Astrocyte of the spinal cord (primary cell): ENCODE measurements at regions of chr4 and their contacts with region 1.

Region 1: DNA sequence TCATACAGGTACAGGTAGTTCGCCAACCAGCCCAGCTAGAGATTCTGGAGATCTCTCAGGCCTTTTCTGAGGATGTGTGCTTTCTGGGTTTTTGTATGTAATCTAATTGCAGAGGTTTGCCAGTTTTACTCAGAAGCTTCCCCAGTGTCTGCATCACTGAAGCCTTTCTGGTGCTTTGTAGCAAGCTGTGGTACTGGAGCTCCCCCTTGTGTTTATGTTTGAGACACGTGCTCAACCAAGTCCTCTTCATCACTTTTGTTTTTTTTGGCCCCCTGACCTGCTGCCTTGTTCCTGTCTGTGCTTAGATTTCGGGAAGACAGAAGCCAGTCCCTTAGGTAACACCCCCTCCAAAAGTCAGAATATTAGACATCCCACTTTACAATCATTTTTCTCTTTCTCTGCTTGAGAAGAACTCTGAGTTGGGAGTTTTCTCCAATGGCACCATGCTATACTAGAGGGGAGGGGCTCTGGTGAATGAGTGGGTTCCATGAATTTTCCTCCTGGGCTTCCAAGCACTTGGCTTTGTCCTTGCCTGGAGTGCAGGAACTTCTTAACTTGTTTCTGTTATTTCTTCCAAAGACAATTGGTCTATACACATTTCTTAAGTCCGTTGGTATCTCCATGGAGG is 128.4 kb upstream of the TBC1D9 start:
- DNase-seq: peak; percentile 73
- H3K4me3 ChIP-seq: no peak overlapping the region
- CTCF ChIP-seq: peak; percentile 78

Region 2: DNA sequence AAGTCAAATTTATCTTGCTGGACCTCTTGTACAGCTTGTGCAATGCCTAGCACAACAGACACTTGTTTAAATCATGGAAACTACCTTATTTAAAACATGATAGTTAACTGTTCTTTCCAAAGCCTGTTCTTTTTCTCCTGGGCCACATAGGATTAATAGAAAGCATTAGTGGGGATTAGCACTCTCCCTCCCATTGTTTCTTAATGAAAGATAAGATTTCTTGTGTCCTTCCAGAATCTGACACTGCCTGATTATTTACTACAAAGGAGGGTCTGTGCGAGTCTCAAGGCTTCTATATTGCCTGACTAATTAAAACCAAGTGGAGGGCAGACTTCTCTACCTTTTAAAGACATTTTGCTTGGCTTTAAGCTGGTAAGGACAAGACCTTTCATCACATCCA is 369.1 kb before region 1 on chr4:
- in situ Hi-C with region 1: no loop called
- DNase-seq: no peak
- H3K4me3 ChIP-seq: no peak overlapping the region
- CTCF ChIP-seq: no peak

Region 3: DNA sequence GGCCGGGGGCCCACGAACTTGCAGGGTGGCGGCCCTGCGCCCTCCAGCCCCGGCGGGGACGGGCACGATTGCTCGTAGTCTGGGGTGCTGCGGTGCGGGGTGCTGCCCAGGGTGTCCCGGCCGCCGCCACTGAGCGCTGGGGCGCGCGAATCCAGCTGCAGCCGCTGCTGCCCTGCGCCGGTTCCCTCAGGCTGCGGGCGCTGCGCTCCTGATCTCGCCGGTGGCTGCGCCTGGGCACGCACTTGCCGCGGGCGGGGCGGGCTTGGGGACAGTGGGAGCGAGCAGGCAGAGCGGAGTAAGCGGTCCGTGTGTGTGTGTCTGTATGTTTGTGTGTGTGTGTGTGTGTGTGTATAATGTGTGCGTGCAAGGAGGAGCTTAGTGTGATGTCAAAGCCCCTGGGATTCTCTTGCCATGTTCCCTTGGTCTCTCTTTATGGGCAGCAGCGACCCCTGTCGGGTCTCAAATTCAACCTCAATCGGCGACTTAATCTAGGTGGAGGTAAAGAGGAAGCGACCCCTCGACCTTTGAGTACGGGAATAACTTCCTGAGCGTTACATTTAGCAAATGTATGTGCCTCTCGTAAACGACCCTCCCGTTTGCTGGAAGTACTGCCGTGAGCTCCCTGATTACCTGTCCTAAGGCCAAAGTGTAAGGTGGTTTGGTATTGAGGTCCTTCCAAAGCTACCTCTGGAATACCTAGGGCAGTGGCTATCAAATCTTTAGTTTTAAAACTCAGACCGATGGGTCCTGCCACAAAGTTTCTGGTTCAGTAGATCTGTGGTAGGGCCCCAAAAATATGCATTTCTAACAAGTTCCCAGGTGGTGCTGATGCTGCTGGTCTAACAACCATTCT is 248.8 kb after region 1 on chr4 and contains the start of gene RNF150:
- in situ Hi-C with region 1: loop called (anchors 25 kb)
- DNase-seq: peak; percentile 93
- H3K4me3 ChIP-seq: peak within 1 kb of the TSS; percentile 77
- CTCF ChIP-seq: peak; percentile 81

Region 4: GRCh38 chr4:141346144-141346543 is 461.6 kb after region 1 on chr4:
- in situ Hi-C with region 1: no loop called
- DNase-seq: peak; percentile 75
- H3K4me3 ChIP-seq: no peak overlapping the region
- CTCF ChIP-seq: peak; percentile 51